Endothelial cell of umbilical vein (primary cell): ENCODE measurements at regions of chr5 and their contacts with region 1.

Region 1: GRCh38 chr5:59768152-59769040 is 125.1 kb downstream of the PDE4D start:
- DNase-seq: peak; percentile 94
- H3K4me3 ChIP-seq: peak overlapping the region; percentile 56 to 92 (median 59)
- H3K27ac ChIP-seq: peak overlapping the region; percentile 86
- H3K4me1 ChIP-seq: peaks cover 48% of the 10 kb centered on the region
- H3K27me3 ChIP-seq: no peaks in the 10 kb centered on the region
- CTCF ChIP-seq: no peak
- POLR2A ChIP-seq: no peak

Region 2: GRCh38 chr5:59287320-59287719 is 481.1 kb before region 1 on chr5:
- CTCF ChIA-PET with region 1: no interaction called
- POLR2A ChIA-PET with region 1: no interaction called
- dilution Hi-C with region 1: no loop called
- intact Hi-C with region 1: loop called (anchors 5 kb)
- DNase-seq: no peak
- H3K4me3 ChIP-seq: no peak overlapping the region
- H3K27ac ChIP-seq: peak overlapping the region; percentile 92
- H3K4me1 ChIP-seq: peaks cover 29% of the 10 kb centered on the region
- H3K27me3 ChIP-seq: no peaks in the 10 kb centered on the region
- CTCF ChIP-seq: no peak
- POLR2A ChIP-seq: no peak

Region 3: GRCh38 chr5:59542851-59543820 is 225.3 kb before region 1 on chr5:
- CTCF ChIA-PET with region 1: no interaction called
- POLR2A ChIA-PET with region 1: no interaction called
- dilution Hi-C with region 1: no loop called
- intact Hi-C with region 1: no loop called
- DNase-seq: peak; percentile 95
- H3K4me3 ChIP-seq: no peak overlapping the region
- H3K27ac ChIP-seq: no peak overlapping the region
- H3K4me1 ChIP-seq: no peaks in the 10 kb centered on the region
- H3K27me3 ChIP-seq: no peaks in the 10 kb centered on the region
- CTCF ChIP-seq: no peak
- POLR2A ChIP-seq: no peak

Region 4: GRCh38 chr5:59709846-59710245 is 58.5 kb before region 1 on chr5:
- CTCF ChIA-PET with region 1: no interaction called
- POLR2A ChIA-PET with region 1: no interaction called
- dilution Hi-C with region 1: no loop called
- intact Hi-C with region 1: no loop called
- DNase-seq: peak; percentile 81
- H3K4me3 ChIP-seq: no peak overlapping the region
- H3K27ac ChIP-seq: no peak overlapping the region
- H3K4me1 ChIP-seq: peaks cover 6% of the 10 kb centered on the region
- H3K27me3 ChIP-seq: no peaks in the 10 kb centered on the region
- CTCF ChIP-seq: no peak
- POLR2A ChIP-seq: no peak

Region 5: GRCh38 chr5:59724482-59725391 is 43.7 kb before region 1 on chr5:
- CTCF ChIA-PET with region 1: interaction called, 3 read pairs
- POLR2A ChIA-PET with region 1: no interaction called
- dilution Hi-C with region 1: no loop called
- intact Hi-C with region 1: loop called (anchors 2 kb)
- DNase-seq: peak; percentile 39
- H3K4me3 ChIP-seq: no peak overlapping the region
- H3K27ac ChIP-seq: no peak overlapping the region
- H3K4me1 ChIP-seq: peaks cover 17% of the 10 kb centered on the region
- H3K27me3 ChIP-seq: no peaks in the 10 kb centered on the region
- CTCF ChIP-seq: peak; percentile 36 to 66
- POLR2A ChIP-seq: no peak

Region 6: GRCh38 chr5:59745422-59745863 is 23.0 kb before region 1 on chr5:
- CTCF ChIA-PET with region 1: interaction called, 6 read pairs
- POLR2A ChIA-PET with region 1: interaction called, 10 read pairs
- dilution Hi-C with region 1: no loop called
- intact Hi-C with region 1: loop called (anchors 1 kb)
- DNase-seq: no peak
- H3K4me3 ChIP-seq: no peak overlapping the region
- H3K27ac ChIP-seq: peak overlapping the region; percentile 75
- H3K4me1 ChIP-seq: peaks cover 28% of the 10 kb centered on the region
- H3K27me3 ChIP-seq: no peaks in the 10 kb centered on the region
- CTCF ChIP-seq: no peak
- POLR2A ChIP-seq: no peak

Region 7: GRCh38 chr5:59790399-59791125 is 22.2 kb after region 1 on chr5:
- CTCF ChIA-PET with region 1: interaction called, 8 read pairs
- POLR2A ChIA-PET with region 1: interaction called, 3 read pairs
- dilution Hi-C with region 1: no loop called
- intact Hi-C with region 1: loop called (anchors 1 kb)
- DNase-seq: peak; percentile 92
- H3K4me3 ChIP-seq: peak overlapping the region in 2 of 3 experiments; percentile 6 to 44
- H3K27ac ChIP-seq: peak overlapping the region; percentile 94
- H3K4me1 ChIP-seq: peaks cover 34% of the 10 kb centered on the region
- H3K27me3 ChIP-seq: no peaks in the 10 kb centered on the region
- CTCF ChIP-seq: no peak
- POLR2A ChIP-seq: peak; percentile 76